Prostate gland (tissue), 2 donors: ENCODE measurements at regions of chr18 and their contacts with region 1.

Region 1: DNA sequence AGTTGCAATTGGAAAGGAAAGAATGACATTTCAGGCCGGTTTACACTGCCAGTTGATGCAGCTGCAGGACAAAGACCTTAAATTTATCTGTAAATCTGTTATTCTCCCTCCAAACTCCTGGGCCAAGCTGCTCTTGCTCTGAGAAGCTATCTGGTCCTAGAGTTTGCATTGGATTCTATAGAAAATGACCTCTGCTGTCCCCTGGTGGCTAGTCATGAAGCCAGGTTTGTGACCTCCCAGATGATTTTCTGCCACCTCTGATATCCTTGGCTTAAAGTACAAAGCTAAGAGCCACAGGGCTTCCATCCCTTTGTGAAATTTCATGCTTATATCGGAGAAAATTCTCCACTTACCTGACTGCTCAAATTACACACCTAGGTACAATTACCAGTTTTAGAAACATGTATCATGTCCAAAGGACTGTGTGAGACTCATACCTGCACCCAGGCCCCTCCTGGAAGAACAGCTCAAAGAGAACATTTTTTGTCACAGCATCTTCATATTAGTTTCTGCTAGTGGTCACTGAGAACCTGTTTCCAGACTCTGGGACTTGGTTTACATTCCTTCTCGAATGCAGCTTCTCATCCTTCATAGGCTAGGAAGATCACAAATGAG is 28.9 kb upstream of the IER3IP1 start:
- DNase-seq: peak; percentile 21
- H3K4me3 ChIP-seq: no peak overlapping the region
- H3K27ac ChIP-seq: no peak overlapping the region
- H3K4me1 ChIP-seq: no peaks in the 10 kb centered on the region
- H3K27me3 ChIP-seq: no peaks in the 10 kb centered on the region
- CTCF ChIP-seq: peak; percentile 28 to 74 (median 66)
- POLR2A ChIP-seq: no peak

Region 2: DNA sequence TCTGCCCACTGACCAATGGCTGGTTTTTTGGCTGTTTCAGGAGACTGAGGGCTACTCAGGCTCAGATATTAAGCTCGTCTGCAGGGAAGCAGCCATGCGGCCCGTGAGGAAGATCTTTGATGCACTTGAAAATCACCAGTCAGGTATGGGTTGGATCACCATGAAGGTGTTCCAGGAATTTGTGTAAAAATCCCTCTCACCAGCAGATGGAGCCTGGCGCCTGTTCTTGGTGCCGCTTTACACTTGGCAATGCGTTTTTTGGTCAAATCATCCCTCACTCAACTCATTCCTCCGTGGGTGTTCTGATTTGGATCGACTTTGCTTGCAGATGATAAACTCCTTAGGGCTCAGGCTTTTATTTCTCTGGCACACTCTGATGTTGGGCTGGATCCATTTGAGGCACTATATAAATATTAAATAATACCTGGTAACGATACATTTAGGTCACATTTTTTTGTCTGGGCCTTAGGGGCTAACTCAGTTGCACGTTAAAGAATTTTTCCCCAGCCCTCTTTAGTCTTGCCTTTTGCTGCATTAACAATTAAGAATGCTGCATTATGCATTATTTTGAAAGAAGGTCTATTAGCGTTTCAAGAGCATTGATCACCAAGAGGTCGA is 104.7 kb before region 1 on chr18:
- intact Hi-C with region 1: loop called (anchors 5 kb)
- DNase-seq: peak; percentile 39
- H3K4me3 ChIP-seq: no peak overlapping the region
- H3K27ac ChIP-seq: no peak overlapping the region
- H3K4me1 ChIP-seq: no peaks in the 10 kb centered on the region
- H3K27me3 ChIP-seq: no peaks in the 10 kb centered on the region
- CTCF ChIP-seq: peak in 3 of 4 experiments; percentile 55 to 70 (median 58)
- POLR2A ChIP-seq: no peak